PC-3 (cell line): ENCODE measurements at regions of chr13 and their contacts with region 1.

Region 1: DNA sequence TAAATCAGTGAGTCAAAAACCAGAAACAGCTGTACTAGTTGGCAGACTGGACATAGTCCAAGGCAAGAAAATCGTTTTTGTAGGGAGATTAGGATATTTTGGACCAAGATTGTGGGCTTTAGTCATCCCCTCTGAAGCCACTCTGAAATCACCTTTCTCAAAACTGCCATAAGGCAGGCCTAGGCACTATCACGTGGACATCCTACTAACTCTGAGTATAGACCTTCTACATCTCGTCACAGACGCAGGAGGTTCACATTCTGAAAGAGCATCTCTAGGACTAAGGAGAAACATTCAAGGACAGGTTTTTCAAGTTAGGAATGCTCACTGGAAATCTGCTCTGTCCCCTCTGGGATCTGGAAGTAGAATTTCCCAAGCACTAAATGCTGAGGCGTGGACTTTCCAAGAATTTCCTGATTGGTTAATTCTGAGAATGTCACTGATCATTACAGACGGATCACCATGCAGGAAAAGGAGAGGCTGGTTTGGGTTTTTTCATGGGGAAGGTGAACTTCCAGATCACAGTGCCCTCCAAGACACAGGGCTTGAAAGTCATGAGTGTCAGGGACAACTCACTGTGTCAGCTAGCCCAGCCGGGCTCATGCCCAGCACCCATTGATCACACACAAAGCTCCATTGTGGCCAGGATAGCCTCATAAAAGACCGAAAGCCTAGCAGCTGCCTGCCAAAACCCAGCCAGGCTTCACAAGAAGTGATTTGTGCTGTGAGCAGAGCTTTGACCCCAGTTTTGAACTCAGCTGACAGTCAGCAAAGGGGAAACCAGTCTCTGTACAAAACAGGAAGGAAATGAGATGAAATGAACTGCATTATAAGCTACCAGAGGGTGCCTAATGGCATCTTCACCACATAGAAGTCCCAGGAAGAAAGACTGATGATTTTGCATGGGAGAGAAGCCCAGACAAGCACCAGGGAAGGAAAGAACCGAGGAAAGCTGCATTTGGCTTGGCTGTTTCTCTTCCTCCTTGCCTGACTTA is 2.7 kb upstream of the RUBCNL start:
- DNase-seq: peak; percentile 13
- ATAC-seq: no peak; the same call in 1 of the 2 replicates
- H3K4me3 ChIP-seq: no peak overlapping the region
- H3K27ac ChIP-seq: no peak overlapping the region
- H3K4me1 ChIP-seq: no peaks in the 10 kb centered on the region
- H3K27me3 ChIP-seq: no peaks in the 10 kb centered on the region
- CTCF ChIP-seq: no peak

Region 2: DNA sequence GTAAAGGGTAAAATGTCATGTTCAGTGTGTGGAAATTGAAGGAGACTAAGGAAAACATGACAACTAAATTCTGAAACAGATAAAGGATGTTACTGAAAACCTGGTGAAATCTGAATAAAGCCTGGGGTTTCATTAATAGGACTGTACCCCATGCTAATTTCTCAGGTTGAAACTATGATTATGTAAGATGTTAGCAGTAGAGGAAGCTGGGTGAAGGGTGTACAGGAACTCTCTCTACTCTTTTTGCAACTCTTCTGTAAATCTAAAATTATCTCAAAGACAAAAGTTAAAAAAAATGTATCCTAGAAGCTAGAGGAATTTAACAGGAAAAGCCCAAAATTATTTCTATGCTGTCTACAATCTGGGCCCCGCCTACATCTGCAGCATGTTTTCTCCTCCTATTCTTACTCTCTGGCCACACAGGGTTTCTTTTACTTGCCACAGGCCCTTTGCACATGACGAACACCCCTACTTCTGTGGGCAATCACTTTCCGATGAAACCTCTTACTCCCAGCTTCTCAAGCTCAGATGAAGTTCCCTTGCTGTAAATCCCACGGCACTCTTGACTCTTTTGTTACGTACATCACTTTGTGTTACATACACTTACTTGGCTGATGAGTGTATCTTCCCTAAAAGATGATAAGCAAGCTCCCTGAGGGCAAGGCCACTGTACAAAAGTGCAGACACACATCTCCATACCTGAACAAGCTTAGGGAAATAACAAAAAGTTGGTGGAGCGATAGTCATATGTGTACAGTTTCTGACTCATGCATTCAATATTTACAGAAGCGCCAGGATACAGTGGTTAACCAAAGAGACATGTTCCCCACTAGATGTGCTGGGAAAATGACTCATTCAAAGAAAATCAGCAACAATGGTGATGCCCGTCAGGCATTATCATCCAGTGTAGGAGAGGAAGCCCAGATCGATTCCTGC is 35.3 kb before region 1 on chr13:
- CTCF ChIA-PET with region 1: no interaction called
- POLR2A ChIA-PET with region 1: interaction called, 19 read pairs
- intact Hi-C with region 1: no loop called
- DNase-seq: peak; percentile 92
- ATAC-seq: peak; percentile 98
- H3K4me3 ChIP-seq: no peak overlapping the region
- H3K27ac ChIP-seq: peak overlapping the region; percentile 80
- H3K4me1 ChIP-seq: peaks cover 9% of the 10 kb centered on the region; the same call in 1 of the 2 replicates
- H3K27me3 ChIP-seq: no peaks in the 10 kb centered on the region
- CTCF ChIP-seq: no peak

Region 3: GRCh38 chr13:46468570-46469463 is 79.1 kb after region 1 on chr13:
- CTCF ChIA-PET with region 1: no interaction called
- POLR2A ChIA-PET with region 1: no interaction called
- intact Hi-C with region 1: no loop called
- DNase-seq: peak; percentile 26
- ATAC-seq: peak; percentile 40
- H3K4me3 ChIP-seq: no peak overlapping the region
- H3K27ac ChIP-seq: no peak overlapping the region
- H3K4me1 ChIP-seq: no peaks in the 10 kb centered on the region; the same call in 1 of the 2 replicates
- H3K27me3 ChIP-seq: no peaks in the 10 kb centered on the region
- CTCF ChIP-seq: no peak

Region 4: GRCh38 chr13:46721054-46721453 is 331.3 kb after region 1 on chr13:
- CTCF ChIA-PET with region 1: no interaction called
- POLR2A ChIA-PET with region 1: no interaction called
- intact Hi-C with region 1: no loop called
- DNase-seq: peak; percentile 41
- ATAC-seq: no peak
- H3K4me3 ChIP-seq: no peak overlapping the region
- H3K27ac ChIP-seq: no peak overlapping the region
- H3K4me1 ChIP-seq: no peaks in the 10 kb centered on the region
- H3K27me3 ChIP-seq: no peaks in the 10 kb centered on the region
- CTCF ChIP-seq: peak; percentile 67